Activated naive CD8-positive, alpha-beta T cell treated with anti-CD3 and anti-CD28 coated beads, Interleukin-2, amount 10 ng/mL, durations not matched to agents 7 days and 5 days (primary cell): ENCODE measurements at regions of chr1 and their contacts with region 1.

Region 1: GRCh38 chr1:36450270-36450918 is at the start of gene OSCP1:
- DNase-seq: peak; percentile 89
- ATAC-seq: peak; percentile 98
- H3K4me3 Mint-ChIP-seq: peak within 1 kb of the TSS; percentile 92
- H3K27ac Mint-ChIP-seq: peak within 1 kb of the TSS; percentile 87
- H3K4me1 Mint-ChIP-seq: peaks cover 25% of the 10 kb centered on the region
- H3K27me3 Mint-ChIP-seq: no peaks in the 10 kb centered on the region
- total RNA-seq, gene OSCP1: 1.1 to 1.8 TPM

Region 2: DNA sequence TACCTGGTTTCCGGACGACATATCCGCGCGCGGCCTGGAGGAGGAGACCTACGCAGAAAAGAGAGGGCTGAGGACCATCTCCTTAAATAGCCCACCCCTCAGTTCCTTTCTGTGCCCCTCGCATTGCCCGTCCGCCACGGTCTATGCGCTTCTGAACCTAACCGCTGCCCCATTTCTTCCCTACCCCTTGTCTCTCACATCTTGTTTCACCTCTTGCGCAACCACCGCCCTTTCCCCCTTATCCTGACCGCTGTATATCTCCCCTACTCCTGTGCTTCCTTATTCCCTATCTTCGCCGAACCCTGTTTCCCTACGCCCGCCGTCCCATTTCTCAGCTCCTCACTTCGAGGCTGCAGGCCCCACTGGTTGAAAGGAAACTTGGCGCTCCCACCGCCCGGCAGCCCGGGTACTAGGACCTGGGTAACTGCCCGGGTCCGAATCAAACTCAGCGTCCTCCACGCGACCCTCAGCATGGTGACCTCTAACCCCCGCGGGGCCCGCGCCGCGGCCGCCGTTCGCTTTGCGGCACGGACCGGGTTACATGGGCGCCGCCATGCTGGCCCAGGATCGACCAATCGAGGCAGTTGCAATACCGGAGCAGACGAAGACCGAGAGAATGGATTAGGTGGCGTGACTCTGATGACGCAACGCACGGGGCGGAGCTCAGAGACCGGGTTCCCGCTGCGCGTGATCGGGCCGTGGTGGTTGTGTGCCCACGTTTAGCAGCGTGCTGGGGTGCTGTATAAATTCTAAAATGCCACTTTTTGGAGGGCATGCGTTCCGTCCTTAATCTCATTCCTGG is 13.6 kb after region 1 on chr1 and contains the start of gene MRPS15:
- POLR2A ChIA-PET with region 1: interaction called, 36 read pairs
- DNase-seq: peak; percentile 94
- ATAC-seq: peak; percentile 89
- H3K4me3 Mint-ChIP-seq: peak within 1 kb of the TSS; percentile 98
- H3K27ac Mint-ChIP-seq: peak within 1 kb of the TSS; percentile 96
- H3K4me1 Mint-ChIP-seq: peaks cover 40% of the 10 kb centered on the region
- H3K27me3 Mint-ChIP-seq: no peaks in the 10 kb centered on the region
- total RNA-seq, gene MRPS15: 84.9 to 86.1 TPM

Region 3: DNA sequence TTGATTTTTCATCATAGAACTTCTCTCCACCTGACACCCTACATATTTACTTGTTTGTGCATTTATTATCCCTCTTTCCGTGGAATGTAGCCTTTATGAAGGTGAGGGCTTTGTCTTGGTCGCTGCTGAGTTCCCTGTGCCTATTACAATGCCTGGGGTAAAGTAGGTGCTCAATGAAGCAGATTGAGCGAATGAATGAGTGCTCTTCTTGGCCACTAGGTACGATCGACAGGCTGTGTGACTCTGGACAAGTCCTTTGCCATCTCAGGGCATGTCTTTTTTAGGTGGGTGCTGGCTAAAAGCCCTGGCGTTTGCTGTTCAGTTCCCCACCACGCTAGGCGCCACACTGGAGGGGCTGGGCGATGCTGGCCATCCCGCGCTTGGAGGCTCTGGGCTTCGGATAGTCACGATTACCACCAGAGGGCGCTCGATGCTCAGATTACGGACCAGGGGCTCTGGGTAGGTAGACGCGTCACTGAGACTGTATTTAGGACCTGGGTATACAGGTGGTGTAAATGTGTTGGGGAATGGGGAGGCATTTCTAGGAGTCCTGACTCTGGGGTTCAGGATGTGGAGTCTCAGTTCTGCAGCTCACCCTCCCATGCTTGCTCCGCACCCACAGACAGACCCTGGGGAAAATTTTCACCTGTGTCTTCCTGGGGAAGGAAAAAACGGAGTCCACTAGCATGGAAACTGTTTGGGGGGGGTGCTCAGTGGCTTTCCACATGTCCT is 103.4 kb after region 1 on chr1:
- POLR2A ChIA-PET with region 1: no interaction called
- DNase-seq: peak; percentile 70
- ATAC-seq: peak; percentile 89
- H3K4me3 Mint-ChIP-seq: no peak overlapping the region
- H3K27ac Mint-ChIP-seq: no peak overlapping the region
- H3K4me1 Mint-ChIP-seq: peaks cover 2% of the 10 kb centered on the region
- H3K27me3 Mint-ChIP-seq: peaks cover 44% of the 10 kb centered on the region